ENCODE measurements at regions of chr17 and their contacts with region 1.

Region 1: GRCh38 chr17:76887802-76888201 is 19.6 kb downstream of the MGAT5B start:
- DNase-seq: no peak
- H3K4me3 ChIP-seq: no peak overlapping the region
- H3K4me3 Mint-ChIP-seq: no peak overlapping the region
- H3K27ac Mint-ChIP-seq: no peak overlapping the region
- H3K4me1 ChIP-seq: no peaks in the 10 kb centered on the region
- H3K4me1 Mint-ChIP-seq: peaks cover 7% of the 10 kb centered on the region
- H3K27me3 ChIP-seq: no peaks in the 10 kb centered on the region
- H3K27me3 Mint-ChIP-seq: no peaks in the 10 kb centered on the region
- CTCF ChIP-seq: no peak

Region 2: DNA sequence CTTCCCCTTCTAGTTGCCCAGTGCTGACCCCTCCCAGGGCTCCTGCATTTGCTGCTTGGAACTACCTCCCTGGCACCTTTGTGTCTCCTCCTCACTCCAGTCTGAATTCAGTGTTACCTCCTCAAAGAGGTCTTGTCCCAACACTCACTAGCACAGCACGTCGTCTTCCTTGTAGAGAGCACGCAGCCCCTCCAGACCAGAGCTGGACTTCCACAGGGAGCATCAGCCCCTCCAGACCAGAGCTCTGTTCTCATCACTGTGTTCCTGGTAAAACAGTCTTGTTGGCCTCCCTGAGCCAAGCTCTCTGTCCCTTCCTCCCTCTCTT is 47.4 kb before region 1 on chr17:
- CTCF ChIA-PET with region 1: no interaction called
- POLR2A ChIA-PET with region 1: no interaction called
- intact Hi-C with region 1: no loop called
- DNase-seq: no peak
- H3K4me3 ChIP-seq: no peak overlapping the region
- H3K4me3 Mint-ChIP-seq: no peak overlapping the region
- H3K27ac Mint-ChIP-seq: no peak overlapping the region
- H3K4me1 ChIP-seq: peaks cover 11% of the 10 kb centered on the region; the same call in 1 of the 2 replicates
- H3K4me1 Mint-ChIP-seq: peaks cover 19% of the 10 kb centered on the region
- H3K27me3 ChIP-seq: no peaks in the 10 kb centered on the region
- H3K27me3 Mint-ChIP-seq: no peaks in the 10 kb centered on the region
- CTCF ChIP-seq: no peak

Region 3: GRCh38 chr17:76901542-76902197 is 13.9 kb after region 1 on chr17:
- CTCF ChIA-PET with region 1: no interaction called
- POLR2A ChIA-PET with region 1: interaction called, 11 read pairs
- intact Hi-C with region 1: no loop called
- DNase-seq: no peak
- H3K4me3 ChIP-seq: no peak overlapping the region
- H3K4me3 Mint-ChIP-seq: no peak overlapping the region
- H3K27ac Mint-ChIP-seq: no peak overlapping the region
- H3K4me1 ChIP-seq: no peaks in the 10 kb centered on the region
- H3K4me1 Mint-ChIP-seq: no peaks in the 10 kb centered on the region
- H3K27me3 ChIP-seq: no peaks in the 10 kb centered on the region
- H3K27me3 Mint-ChIP-seq: no peaks in the 10 kb centered on the region
- CTCF ChIP-seq: no peak

Measured in Caco-2 (cell line).